ENCODE measurements at regions of chr1 and their contacts with region 1.

Region 1: GRCh38 chr1:234486498-234487448 is 7.8 kb upstream of the TARBP1 start:
- DNase-seq: peak in 2 of 5 donors; percentile 32 to 45
- ATAC-seq: peak; percentile 51 to 84 (median 82)
- H3K4me3 ChIP-seq: peak overlapping the region in 3 of 12 donors; percentile 4 to 13 (median 8)
- H3K27ac ChIP-seq: peak overlapping the region in 5 of 12 donors; percentile 10 to 43 (median 32)
- H3K4me1 ChIP-seq: peaks cover 0 to 30% (median 5%) of the 10 kb centered on the region in 12 donors
- H3K27me3 ChIP-seq: peaks cover 0 to 7% (median 0%) of the 10 kb centered on the region in 9 donors
- CTCF ChIP-seq: peak; percentile 51 to 84 (median 70)
- POLR2A ChIP-seq: no peak

Region 2: DNA sequence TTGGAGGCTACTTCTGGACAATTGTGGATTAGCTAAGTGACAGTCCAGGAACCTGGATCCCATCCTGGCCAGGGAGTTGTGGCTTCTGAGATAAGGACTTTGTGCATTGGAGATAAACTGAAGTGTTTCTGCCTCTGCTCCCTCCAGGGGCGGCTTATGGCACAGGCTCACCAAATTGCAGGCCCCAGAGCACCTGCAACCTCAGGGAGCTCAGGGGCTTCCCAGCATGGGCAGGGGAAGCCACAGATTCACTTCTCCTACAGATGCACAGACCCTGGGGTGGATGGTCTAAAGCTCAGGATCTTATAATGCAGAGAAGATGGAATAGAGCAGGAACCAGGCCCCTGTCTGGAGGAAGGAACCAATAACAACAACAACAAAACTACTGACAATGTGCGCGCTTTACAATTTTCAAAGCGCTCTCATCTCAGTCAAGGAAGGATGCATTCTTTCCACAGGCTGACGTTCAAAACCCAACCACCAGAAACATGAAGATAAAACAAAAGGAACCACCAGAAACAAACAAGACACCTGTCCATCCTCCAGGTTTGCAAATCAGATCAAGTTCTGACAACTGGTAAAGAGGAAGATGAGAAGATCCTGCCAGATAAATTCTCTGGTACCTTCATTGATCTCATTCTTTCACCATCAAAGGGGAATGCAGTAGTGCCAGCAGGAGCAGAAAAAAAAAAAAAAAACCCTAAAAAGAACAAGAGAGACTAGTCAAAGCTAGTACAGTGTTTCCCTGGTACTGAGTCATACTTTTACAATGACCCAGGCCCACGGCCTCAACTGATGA is 244.2 kb after region 1 on chr1:
- intact Hi-C with region 1: loop called in 3 of 10 experiments (anchors 10 kb)
- DNase-seq: no peak
- ATAC-seq: no peak
- H3K4me3 ChIP-seq: no peak overlapping the region
- H3K27ac ChIP-seq: peak overlapping the region in 1 of 12 donors; percentile 66
- H3K4me1 ChIP-seq: peaks cover 17 to 49% (median 27%) of the 10 kb centered on the region in 12 donors
- H3K27me3 ChIP-seq: no peaks in the 10 kb centered on the region
- CTCF ChIP-seq: no peak
- POLR2A ChIP-seq: no peak

Region 3: GRCh38 chr1:234778221-234779159 is 291.7 kb after region 1 on chr1:
- intact Hi-C with region 1: no loop called
- DNase-seq: peak in 3 of 5 donors; percentile 39 to 46 (median 44)
- ATAC-seq: peak in 3 of 4 donors; percentile 2 to 19 (median 6)
- H3K4me3 ChIP-seq: peak overlapping the region in 1 of 12 donors; percentile 9
- H3K27ac ChIP-seq: peak overlapping the region in 1 of 12 donors; percentile 23
- H3K4me1 ChIP-seq: peaks cover 0 to 37% (median 0%) of the 10 kb centered on the region in 12 donors
- H3K27me3 ChIP-seq: peaks cover 0 to 71% (median 25%) of the 10 kb centered on the region in 9 donors
- CTCF ChIP-seq: no peak
- POLR2A ChIP-seq: peak in 1 of 2 donors; percentile 3

Region 4: GRCh38 chr1:235093696-235094592 is 607.2 kb after region 1 on chr1:
- intact Hi-C with region 1: loop called in 3 of 10 experiments (anchors 2 to 5 kb)
- DNase-seq: peak; percentile 66 to 86 (median 71)
- ATAC-seq: peak; percentile 72 to 84 (median 81)
- H3K4me3 ChIP-seq: peak overlapping the region in 10 of 12 donors; percentile 9 to 50 (median 34)
- H3K27ac ChIP-seq: peak overlapping the region in 2 of 12 donors; percentile 11 to 50
- H3K4me1 ChIP-seq: peaks cover 0 to 14% (median 9%) of the 10 kb centered on the region in 12 donors
- H3K27me3 ChIP-seq: no peaks in the 10 kb centered on the region
- CTCF ChIP-seq: peak; percentile 78 to 95 (median 87)
- POLR2A ChIP-seq: no peak

Region 5: GRCh38 chr1:235423191-235423652 is 936.4 kb after region 1 on chr1:
- intact Hi-C with region 1: loop called in 3 of 10 experiments (anchors 10 kb)
- DNase-seq: no peak
- ATAC-seq: no peak
- H3K4me3 ChIP-seq: no peak overlapping the region
- H3K27ac ChIP-seq: no peak overlapping the region
- H3K4me1 ChIP-seq: peaks cover 0 to 7% (median 0%) of the 10 kb centered on the region in 12 donors
- H3K27me3 ChIP-seq: no peaks in the 10 kb centered on the region
- CTCF ChIP-seq: no peak
- POLR2A ChIP-seq: no peak